H1 (cell line): ENCODE measurements at regions of chr1 and their contacts with region 1.

Region 1: GRCh38 chr1:12184008-12184681 is 17.4 kb downstream of the TNFRSF1B start:
- DNase-seq: no peak
- H3K4me3 ChIP-seq: no peak overlapping the region; a peak in 2 of 8 replicates
- H3K27ac ChIP-seq: no peak overlapping the region
- H3K4me1 ChIP-seq: peaks cover 0 to 11% (median 7%) of the 10 kb centered on the region in 4 experiments; a peak in 6 of 7 replicates
- H3K27me3 ChIP-seq: no peaks in the 10 kb centered on the region
- CTCF ChIP-seq: no peak
- EP300 ChIP-seq: no peak
- POLR2A ChIP-seq: no peak
- RAD21 ChIP-seq: no peak

Region 2: GRCh38 chr1:12029720-12030339 is 154.3 kb before region 1 on chr1:
- CTCF ChIA-PET with region 1: no interaction called
- POLR2A ChIA-PET with region 1: no interaction called
- DNase-seq: no peak
- H3K4me3 ChIP-seq: no peak overlapping the region
- H3K27ac ChIP-seq: no peak overlapping the region
- H3K4me1 ChIP-seq: no peaks in the 10 kb centered on the region; a peak in 1 of 7 replicates
- H3K27me3 ChIP-seq: no peaks in the 10 kb centered on the region
- CTCF ChIP-seq: no peak
- EP300 ChIP-seq: no peak
- POLR2A ChIP-seq: no peak
- RAD21 ChIP-seq: no peak

Region 3: GRCh38 chr1:12153181-12153785 is 30.9 kb before region 1 on chr1:
- CTCF ChIA-PET with region 1: interaction called, 15 read pairs
- POLR2A ChIA-PET with region 1: no interaction called
- DNase-seq: no peak
- H3K4me3 ChIP-seq: no peak overlapping the region
- H3K27ac ChIP-seq: no peak overlapping the region
- H3K4me1 ChIP-seq: 0 out of 7 replicates have a peak, but pooled peaks cover 0 to 2% (median 0%) of the 10 kb centered on the region in 4 experiments
- H3K27me3 ChIP-seq: peaks cover 0 to 2% (median 0%) of the 10 kb centered on the region in 4 experiments; a peak in 1 of 7 replicates
- CTCF ChIP-seq: no peak
- EP300 ChIP-seq: no peak
- POLR2A ChIP-seq: no peak
- RAD21 ChIP-seq: no peak

Region 4: DNA sequence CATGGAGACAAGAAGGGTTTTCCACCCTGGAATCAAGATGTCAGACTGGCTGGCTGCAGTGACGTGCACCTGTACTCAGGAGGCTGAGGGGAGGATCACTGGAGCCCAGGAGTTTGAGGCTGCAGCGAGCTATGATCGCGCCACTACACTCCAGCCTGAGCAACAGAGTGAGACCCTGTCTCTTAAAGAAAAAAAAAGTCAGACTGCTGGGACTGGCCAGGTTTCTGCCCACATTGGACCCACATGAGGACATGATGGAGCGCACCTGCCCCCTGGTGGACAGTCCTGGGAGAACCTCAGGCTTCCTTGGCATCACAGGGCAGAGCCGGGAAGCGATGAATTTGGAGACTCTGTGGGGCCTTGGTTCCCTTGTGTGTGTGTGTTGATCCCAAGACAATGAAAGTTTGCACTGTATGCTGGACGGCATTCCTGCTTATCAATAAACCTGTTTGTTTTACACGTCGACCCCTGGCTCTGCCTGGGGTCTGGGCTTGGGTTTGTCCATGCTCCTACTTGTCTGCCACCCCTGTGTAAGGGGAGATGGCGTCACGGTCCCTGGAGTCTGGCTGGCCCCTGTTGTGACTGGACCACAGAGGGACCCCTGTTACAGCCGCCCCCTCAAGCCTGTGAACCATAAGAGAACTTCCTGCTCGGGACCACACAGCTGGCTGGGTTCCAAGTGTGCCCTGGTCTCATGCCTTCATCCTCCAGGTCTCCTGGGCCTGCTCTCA is 24.8 kb after region 1 on chr1:
- CTCF ChIA-PET with region 1: interaction called, 165 read pairs
- POLR2A ChIA-PET with region 1: interaction called, 3 read pairs
- DNase-seq: peak; percentile 82 to 99
- H3K4me3 ChIP-seq: no peak overlapping the region
- H3K27ac ChIP-seq: no peak overlapping the region
- H3K4me1 ChIP-seq: peaks cover 3 to 6% (median 4%) of the 10 kb centered on the region in 4 experiments; a peak in 6 of 7 replicates
- H3K27me3 ChIP-seq: no peaks in the 10 kb centered on the region
- CTCF ChIP-seq: peak; percentile 94 to 98 (median 94)
- EP300 ChIP-seq: no peak
- POLR2A ChIP-seq: no peak
- RAD21 ChIP-seq: peak; percentile 97